Esophagus muscularis mucosa (tissue), 4 donors: ENCODE measurements at regions of chr12 and their contacts with region 1.

Region 1: GRCh38 chr12:113422030-113422885 is at the start of gene SDSL:
- DNase-seq: peak; percentile 95
- H3K4me3 ChIP-seq: peak within 1 kb of the TSS; percentile 52 to 67 (median 56)
- H3K27ac ChIP-seq: peak within 1 kb of the TSS; percentile 40 to 62 (median 58)
- H3K4me1 ChIP-seq: peaks cover 8 to 21% (median 16%) of the 10 kb centered on the region in 4 donors
- H3K27me3 ChIP-seq: no peaks in the 10 kb centered on the region
- CTCF ChIP-seq: no peak
- EP300 ChIP-seq: no peak
- POLR2A ChIP-seq: no peak
- total RNA-seq, gene SDSL: 2.7 to 5.6 (median 3.2) TPM

Region 2: DNA sequence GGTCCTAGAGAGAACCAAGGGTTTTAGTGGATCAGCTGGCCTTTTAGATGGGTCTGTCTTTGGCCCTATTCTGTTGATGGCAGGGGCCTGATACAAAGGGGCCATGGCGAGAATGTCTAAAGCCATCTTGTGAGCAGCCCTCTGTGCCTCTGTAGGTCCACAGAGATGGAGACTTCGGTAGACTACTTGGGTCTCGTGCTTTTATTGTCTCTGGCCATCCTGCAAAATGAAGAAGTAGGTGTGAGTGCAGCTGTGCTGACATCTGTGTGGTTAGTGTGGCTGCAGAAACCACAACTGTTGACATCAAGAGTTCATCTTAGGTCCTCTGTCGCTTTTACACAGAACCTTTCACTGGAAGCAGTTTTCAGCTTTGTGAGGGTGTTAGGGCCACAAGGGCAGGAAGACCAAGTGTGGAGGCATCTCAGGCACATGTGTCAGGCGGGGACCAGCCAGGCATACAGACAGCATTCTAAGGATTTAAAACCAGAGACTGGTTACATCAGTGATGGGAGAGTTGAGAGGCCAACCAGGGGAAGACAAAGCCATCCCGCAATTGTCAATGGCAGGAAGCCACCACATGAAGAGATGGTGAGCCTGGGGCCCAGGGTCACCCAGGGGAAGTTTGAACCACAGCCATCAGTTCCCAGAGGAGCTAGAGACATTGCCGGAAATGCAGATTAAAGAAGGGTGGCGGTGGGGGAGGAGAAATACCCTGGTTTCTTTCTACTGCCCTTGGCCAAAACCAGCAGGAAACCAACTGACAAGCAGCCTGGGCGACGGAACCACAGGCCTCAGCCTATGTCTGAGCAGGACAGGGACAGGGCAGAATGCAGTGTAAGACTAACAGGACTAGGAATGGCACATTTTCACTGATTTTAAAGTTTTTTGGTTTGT is 214.0 kb before region 1 on chr12:
- intact Hi-C with region 1: loop called (anchors 10 kb)
- DNase-seq: no peak
- H3K4me3 ChIP-seq: no peak overlapping the region
- H3K27ac ChIP-seq: peak overlapping the region in 3 of 4 donors; percentile 1 to 59 (median 25)
- H3K4me1 ChIP-seq: peaks cover 0 to 8% (median 3%) of the 10 kb centered on the region in 4 donors
- H3K27me3 ChIP-seq: no peaks in the 10 kb centered on the region
- CTCF ChIP-seq: no peak
- EP300 ChIP-seq: no peak
- POLR2A ChIP-seq: no peak

Region 3: GRCh38 chr12:113310489-113310888 is 111.8 kb before region 1 on chr12:
- intact Hi-C with region 1: loop called (anchors 10 kb)
- DNase-seq: no peak
- H3K4me3 ChIP-seq: no peak overlapping the region
- H3K27ac ChIP-seq: no peak overlapping the region
- H3K4me1 ChIP-seq: peaks cover 0 to 11% (median 5%) of the 10 kb centered on the region in 4 donors
- H3K27me3 ChIP-seq: no peaks in the 10 kb centered on the region
- CTCF ChIP-seq: no peak
- EP300 ChIP-seq: no peak
- POLR2A ChIP-seq: no peak

Region 4: DNA sequence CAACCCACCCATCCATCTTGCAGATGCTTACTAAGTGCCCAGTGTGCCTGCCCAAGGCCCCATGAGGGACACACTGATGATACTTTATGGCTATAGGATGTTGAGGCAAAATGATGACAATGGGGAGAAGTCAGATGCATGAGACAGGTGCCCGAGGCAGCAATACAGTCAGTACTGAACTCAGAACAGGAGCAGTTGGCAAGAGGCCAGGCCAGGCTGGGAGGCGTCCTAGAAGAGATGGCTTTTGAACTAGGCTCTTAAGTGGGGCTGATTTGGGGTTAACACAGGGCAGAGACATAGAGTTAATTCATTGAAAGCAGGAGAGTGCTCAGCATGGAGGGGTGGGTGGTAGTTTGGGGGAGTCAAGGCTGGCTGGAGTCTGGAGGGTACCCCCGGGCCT is 48.3 kb before region 1 on chr12:
- intact Hi-C with region 1: no loop called
- DNase-seq: no peak
- H3K4me3 ChIP-seq: no peak overlapping the region
- H3K27ac ChIP-seq: no peak overlapping the region
- H3K4me1 ChIP-seq: no peaks in the 10 kb centered on the region
- H3K27me3 ChIP-seq: no peaks in the 10 kb centered on the region
- CTCF ChIP-seq: no peak
- EP300 ChIP-seq: no peak
- POLR2A ChIP-seq: no peak